Right ventricle myocardium superior (tissue), 1 donor: ENCODE measurements at regions of chr5 and their contacts with region 1.

Region 1: GRCh38 chr5:138077065-138077696 is 6.7 kb upstream of the WNT8A start:
- DNase-seq: peak; percentile 57
- ATAC-seq: peak; percentile 83

Region 2: GRCh38 chr5:138035605-138036537 is 41.3 kb before region 1 on chr5:
- intact Hi-C with region 1: loop called (anchors 5 kb)
- DNase-seq: no peak
- ATAC-seq: peak; percentile 56

Region 3: GRCh38 chr5:138132543-138132942 is 55.4 kb after region 1 on chr5:
- intact Hi-C with region 1: loop called (anchors 5 kb)
- DNase-seq: no peak
- ATAC-seq: no peak